ENCODE measurements at regions of chr1 and their contacts with region 1.

Region 1: DNA sequence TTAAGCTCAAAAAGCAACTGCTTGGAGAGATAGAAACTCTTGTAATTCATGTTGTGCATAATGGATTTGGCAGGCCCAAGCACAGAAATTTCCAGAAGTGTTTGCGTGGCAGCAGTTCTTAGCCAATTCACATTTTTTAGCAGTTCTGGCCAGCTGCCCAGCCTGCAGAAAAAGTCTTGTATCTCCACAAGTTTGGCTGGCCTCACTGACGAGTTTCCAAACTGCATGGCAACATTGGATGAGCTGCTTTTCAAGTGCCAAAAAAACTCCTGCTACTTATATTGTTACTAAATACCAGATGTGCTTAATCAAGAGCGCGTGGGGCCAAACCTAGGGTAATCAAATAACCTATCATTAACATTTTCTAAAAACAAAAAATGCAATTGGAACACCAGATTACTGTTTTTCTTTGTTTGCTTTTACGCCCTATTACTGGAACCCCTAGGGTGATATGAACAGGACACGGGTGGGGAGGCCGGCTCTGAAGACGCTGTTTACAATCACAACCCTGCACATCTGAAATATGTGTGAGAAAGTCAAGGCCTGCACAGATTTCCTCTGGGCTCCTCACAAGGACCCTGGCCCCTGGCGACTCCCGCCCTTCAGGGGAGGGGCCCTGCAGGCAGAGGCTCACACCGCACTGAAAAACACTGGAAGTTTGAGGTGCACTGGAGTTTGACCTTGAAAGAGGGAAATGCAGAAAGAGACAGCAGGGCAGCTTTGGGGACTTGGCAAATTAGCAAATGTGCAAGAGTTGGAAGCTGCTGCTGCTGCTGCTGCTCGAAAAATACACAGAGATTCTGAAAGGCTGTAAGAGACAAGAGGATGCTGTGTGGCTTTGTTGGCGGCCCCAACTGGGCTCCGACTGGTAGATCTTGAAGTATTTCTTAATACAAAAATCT is 55.2 kb upstream of the TARBP1 start:
- DNase-seq: peak in 38 of 42 donors; percentile 39 to 90 (median 76)

Region 2: GRCh38 chr1:233960386-233960785 is 573.8 kb before region 1 on chr1:
- intact Hi-C with region 1: no loop called
- DNase-seq: no peak

Region 3: GRCh38 chr1:234579967-234580366 is 45.7 kb after region 1 on chr1:
- intact Hi-C with region 1: loop called (anchors 10 kb)
- DNase-seq: no peak

Region 4: GRCh38 chr1:234599617-234600417 is 65.6 kb after region 1 on chr1:
- intact Hi-C with region 1: loop called (anchors 5 kb)
- DNase-seq: peak; percentile 54 to 93 (median 85)

Region 5: GRCh38 chr1:234617131-234617985 is 83.1 kb after region 1 on chr1:
- intact Hi-C with region 1: no loop called
- DNase-seq: peak in 1 of 42 donors; percentile 19